ENCODE measurements at regions of chr7 and their contacts with region 1.

Region 1: GRCh38 chr7:45111298-45112223 is at the start of gene TBRG4:
- DNase-seq: peak; percentile 99
- H3K4me3 ChIP-seq: peak within 1 kb of the TSS; percentile 82 to 95 (median 88)
- H3K27ac ChIP-seq: peak within 1 kb of the TSS; percentile 89 to 97 (median 93)
- H3K4me1 ChIP-seq: peaks cover 33 to 57% (median 52%) of the 10 kb centered on the region in 6 donors
- H3K27me3 ChIP-seq: no peaks in the 10 kb centered on the region
- CTCF ChIP-seq: peak in 5 of 11 experiments; percentile 15 to 43 (median 27)
- POLR2A ChIP-seq: peak; percentile 55 to 86 (median 68)
- total RNA-seq, gene TBRG4: 37.9 to 77.1 (median 67.4) TPM

Region 2: GRCh38 chr7:44999245-45000095 is 112.1 kb before region 1 on chr7:
- intact Hi-C with region 1: loop called (anchors 10 kb)
- DNase-seq: peak; percentile 100
- H3K4me3 ChIP-seq: peak overlapping the region; percentile 43 to 84 (median 60)
- H3K27ac ChIP-seq: peak overlapping the region; percentile 77 to 96 (median 88)
- H3K4me1 ChIP-seq: peaks cover 15 to 80% (median 47%) of the 10 kb centered on the region in 6 donors
- H3K27me3 ChIP-seq: no peaks in the 10 kb centered on the region
- CTCF ChIP-seq: peak in 7 of 11 experiments; percentile 23 to 61 (median 46)
- POLR2A ChIP-seq: peak in 1 of 3 donors; percentile 29